Heart right ventricle (tissue), 16 donors: ENCODE measurements at regions of chr3 and their contacts with region 1.

Region 1: GRCh38 chr3:152629363-152630122 is 205.4 kb upstream of the P2RY1 start:
- DNase-seq: no peak
- ATAC-seq: no peak
- H3K4me3 ChIP-seq: no peak overlapping the region
- H3K27ac ChIP-seq: no peak overlapping the region
- H3K4me1 ChIP-seq: no peaks in the 10 kb centered on the region
- H3K27me3 ChIP-seq: no peaks in the 10 kb centered on the region
- CTCF ChIP-seq: no peak

Region 2: GRCh38 chr3:151086484-151087456 is 1542.8 kb before region 1 on chr3:
- intact Hi-C with region 1: loop called in 1 of 10 experiments (anchors 5 kb)
- DNase-seq: peak; percentile 67 to 68
- ATAC-seq: peak; percentile 82 to 93 (median 89)
- H3K4me3 ChIP-seq: peak overlapping the region; percentile 37 to 75 (median 66)
- H3K27ac ChIP-seq: peak overlapping the region in 5 of 10 donors; percentile 31 to 65 (median 36)
- H3K4me1 ChIP-seq: peaks cover 0 to 27% (median 15%) of the 10 kb centered on the region in 9 donors
- H3K27me3 ChIP-seq: peaks cover 0 to 65% (median 33%) of the 10 kb centered on the region in 7 donors
- CTCF ChIP-seq: peak in 8 of 9 donors; percentile 21 to 66 (median 42)